HEK293 (cell line): ENCODE measurements at regions of chr14 and their contacts with region 1.

Region 1: GRCh38 chr14:96275177-96276112 is 19.4 kb downstream of the BDKRB1 start:
- H3K4me3 ChIP-seq: no peak overlapping the region
- H3K27ac ChIP-seq: no peak overlapping the region
- H3K4me1 ChIP-seq: no peaks in the 10 kb centered on the region
- CTCF ChIP-seq: peak; percentile 75

Region 2: DNA sequence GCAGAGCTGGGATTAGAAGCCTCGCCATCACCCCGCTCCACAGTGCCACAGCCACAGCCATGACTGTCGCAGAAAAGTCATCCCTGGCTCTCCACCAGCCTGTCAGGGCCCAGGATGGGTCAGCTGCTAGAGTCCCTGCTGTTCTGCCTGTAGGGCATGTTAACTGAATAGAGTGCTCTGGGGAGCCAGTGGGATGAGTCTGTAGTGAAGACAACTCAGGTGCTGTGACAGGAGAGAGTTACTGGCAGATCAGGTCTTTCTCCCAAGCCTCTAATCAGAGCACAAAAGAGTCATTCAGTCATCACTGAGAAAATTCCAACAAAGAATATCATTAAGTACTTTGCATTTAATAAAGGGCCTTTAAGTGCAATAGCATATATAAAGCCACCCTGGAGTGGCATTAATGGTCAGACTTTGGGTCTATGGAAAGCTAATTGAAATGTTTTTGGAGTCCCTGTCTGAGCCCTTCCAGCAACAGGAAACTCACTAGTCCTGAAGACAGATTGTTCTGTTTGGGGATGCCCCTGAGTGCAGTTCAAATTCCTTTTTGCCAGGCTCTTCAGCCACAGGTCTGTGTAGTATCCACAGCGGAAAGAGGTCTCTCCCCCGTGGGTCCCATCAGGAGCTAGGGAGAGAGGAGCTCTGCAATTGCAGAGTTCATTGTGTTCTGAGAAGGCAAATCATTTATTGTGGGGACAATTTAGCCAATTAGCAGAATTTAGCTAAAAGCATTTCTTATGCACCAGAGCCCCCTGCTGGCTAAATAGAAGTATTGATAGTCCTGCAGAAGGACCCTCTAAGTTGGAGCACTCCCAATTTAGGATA is 281.5 kb before region 1 on chr14:
- CTCF ChIA-PET with region 1: interaction called, 16 read pairs
- POLR2A ChIA-PET with region 1: no interaction called
- H3K4me3 ChIP-seq: no peak overlapping the region
- H3K27ac ChIP-seq: no peak overlapping the region
- H3K4me1 ChIP-seq: no peaks in the 10 kb centered on the region
- CTCF ChIP-seq: peak; percentile 65

Region 3: DNA sequence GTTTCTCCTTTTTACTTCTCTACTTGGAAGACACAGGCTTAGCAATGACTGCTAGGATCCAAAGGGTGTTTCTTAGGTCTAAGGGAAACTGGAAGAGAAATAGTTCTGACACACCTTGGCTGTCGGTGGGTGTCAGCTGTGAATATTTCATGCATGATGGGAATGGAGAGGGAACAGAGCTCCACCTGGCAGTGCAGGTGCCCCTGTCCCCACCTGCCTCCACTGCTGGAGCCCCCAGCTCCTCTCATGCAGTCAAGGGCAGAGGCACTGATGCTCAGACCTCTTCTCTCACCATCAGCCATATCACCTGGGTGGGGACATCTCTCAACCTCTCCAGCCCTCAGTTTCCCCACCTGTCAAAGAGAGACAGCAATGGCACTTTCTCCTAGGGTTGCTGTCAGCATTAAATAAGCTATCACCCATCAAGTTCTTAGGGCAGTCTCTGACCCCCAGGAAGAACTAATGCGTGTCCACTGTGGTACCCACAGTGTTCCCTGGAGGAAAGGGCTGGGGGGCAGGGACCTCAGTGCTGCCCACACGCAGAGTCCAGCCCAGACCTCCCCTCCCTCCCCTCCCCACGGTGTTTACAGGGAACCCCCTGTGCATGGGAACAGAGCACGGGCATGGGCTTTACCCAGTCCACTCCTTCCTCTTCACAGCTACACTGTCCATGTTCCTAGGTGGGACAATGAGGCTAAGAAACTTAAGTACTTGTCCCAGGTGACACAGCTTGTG is 167.2 kb before region 1 on chr14:
- CTCF ChIA-PET with region 1: interaction called, 165 read pairs
- POLR2A ChIA-PET with region 1: no interaction called
- H3K4me3 ChIP-seq: no peak overlapping the region
- H3K27ac ChIP-seq: no peak overlapping the region
- H3K4me1 ChIP-seq: no peaks in the 10 kb centered on the region
- CTCF ChIP-seq: no peak

Region 4: DNA sequence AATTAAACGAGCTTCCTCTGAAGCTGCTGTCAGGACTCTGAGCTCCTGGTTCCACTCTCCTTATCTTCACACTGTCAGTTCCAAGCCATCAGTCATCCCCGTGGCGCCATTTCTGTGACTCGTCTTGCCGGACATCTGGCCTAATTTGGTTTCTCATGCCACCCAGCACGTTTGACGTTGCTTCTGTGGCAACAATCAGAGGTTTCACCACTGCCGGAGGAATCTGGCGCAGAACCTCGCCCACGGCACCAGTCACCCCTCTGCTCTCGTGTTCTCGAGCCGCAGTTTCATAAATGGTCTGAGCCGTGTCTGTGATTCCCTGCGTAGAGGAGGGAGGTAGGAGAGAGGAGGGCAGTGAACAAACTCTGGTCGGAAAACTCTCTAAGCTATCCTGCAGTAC is 10.2 kb after region 1 on chr14:
- CTCF ChIA-PET with region 1: interaction called, 12 read pairs
- POLR2A ChIA-PET with region 1: no interaction called
- H3K4me3 ChIP-seq: no peak overlapping the region
- H3K27ac ChIP-seq: no peak overlapping the region
- H3K4me1 ChIP-seq: no peaks in the 10 kb centered on the region
- CTCF ChIP-seq: no peak

Region 5: GRCh38 chr14:96424109-96424989 is 148.9 kb after region 1 on chr14:
- CTCF ChIA-PET with region 1: interaction called, 15 read pairs
- POLR2A ChIA-PET with region 1: no interaction called
- H3K4me3 ChIP-seq: peak overlapping the region; percentile 14
- H3K27ac ChIP-seq: no peak overlapping the region
- H3K4me1 ChIP-seq: no peaks in the 10 kb centered on the region
- CTCF ChIP-seq: peak; percentile 41; the same call in 1 of the 2 replicates